ENCODE measurements at regions of chr1 and their contacts with region 1.

Region 1: GRCh38 chr1:192974701-192975100 is 84.5 kb downstream of the UCHL5 start:
- DNase-seq: no peak
- H3K4me3 ChIP-seq: no peak overlapping the region
- H3K27ac ChIP-seq: no peak overlapping the region
- H3K4me1 ChIP-seq: no peaks in the 10 kb centered on the region
- H3K27me3 ChIP-seq: no peaks in the 10 kb centered on the region
- CTCF ChIP-seq: no peak

Region 2: GRCh38 chr1:193562121-193562520 is 587.4 kb after region 1 on chr1:
- intact Hi-C with region 1: loop called (anchors 5 kb)
- DNase-seq: no peak
- H3K4me3 ChIP-seq: no peak overlapping the region
- H3K27ac ChIP-seq: no peak overlapping the region
- H3K4me1 ChIP-seq: no peaks in the 10 kb centered on the region
- H3K27me3 ChIP-seq: no peaks in the 10 kb centered on the region
- CTCF ChIP-seq: no peak